ENCODE measurements at regions of chr17 and their contacts with region 1.

Region 1: DNA sequence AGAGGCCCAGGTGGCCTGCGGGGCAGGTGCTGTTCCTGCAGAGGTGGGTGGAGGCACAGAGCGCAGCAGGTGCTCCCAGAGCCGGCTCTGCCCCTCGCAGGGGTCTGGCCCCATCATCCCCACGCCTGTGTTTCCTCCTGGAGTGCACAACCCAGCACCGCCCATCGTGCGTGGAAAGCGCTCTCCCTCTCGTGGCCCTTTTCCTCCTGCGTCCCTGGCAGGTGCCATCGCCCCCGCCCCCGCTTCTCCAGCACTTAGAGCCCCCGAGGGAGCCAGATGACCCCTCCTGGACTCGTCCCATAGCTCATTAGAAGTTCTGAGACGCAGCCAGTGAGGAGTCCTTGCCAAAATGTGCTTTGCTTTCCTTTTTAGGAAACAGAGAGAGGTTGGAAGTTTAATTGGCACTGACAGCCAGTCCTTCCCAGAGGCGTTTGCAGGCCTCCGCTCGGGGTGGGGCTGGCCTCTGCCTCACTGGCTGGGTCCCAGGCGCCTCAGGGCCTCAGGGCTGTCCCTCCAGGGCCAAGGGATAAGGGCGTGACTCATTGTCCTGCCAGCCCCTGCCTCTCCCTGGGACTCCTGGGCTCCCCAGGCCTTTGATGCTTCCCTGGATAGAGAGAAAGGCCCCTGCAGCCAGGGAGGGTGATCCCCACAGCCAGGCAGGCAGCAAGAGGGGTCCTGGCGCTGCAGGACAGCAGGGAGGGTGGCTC is 32.2 kb upstream of the CHMP6 start:
- DNase-seq: peak; percentile 92

Region 2: DNA sequence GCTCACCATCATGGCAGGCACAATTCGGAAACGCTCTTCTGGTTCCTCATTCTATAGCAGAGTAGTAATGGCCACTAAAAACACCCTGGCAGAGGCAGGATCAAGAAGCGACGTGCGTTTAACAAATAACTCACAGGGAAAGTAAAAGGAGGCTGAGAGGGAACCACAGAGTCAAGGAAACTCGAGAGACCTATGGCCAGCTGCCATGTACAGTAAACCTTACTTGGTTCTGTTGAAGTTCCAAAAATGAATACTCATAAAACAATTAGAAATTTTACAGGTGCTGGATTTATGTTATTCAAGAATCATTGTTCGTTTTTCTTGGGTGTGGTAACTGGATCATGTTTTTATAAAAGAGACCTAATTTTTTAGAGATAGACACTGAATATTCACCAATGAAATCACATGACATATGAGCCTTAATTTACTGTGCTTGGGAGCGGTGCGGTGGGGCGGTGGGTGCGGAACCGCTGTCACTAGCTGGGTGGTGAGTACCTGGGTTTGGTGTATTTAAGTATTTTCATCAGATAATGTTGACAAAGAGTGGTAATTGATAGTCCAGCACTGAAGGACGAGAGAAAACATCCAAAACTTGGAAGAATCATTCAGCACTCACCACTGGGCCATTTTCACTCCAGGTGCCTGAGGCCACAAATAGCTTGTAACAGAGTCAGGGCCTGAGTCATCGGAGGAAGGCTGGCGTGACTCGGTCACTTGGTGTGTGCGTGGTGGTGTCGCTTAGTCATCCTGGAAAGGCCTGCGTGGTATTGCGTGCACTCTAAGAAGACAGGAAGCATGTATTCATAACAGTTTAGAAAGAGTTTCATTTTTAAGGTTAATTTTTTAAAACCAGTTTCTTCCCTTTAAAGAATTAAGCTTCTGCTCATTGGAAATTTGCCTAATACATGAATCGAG is 103.3 kb before region 1 on chr17:
- intact Hi-C with region 1: loop called (anchors 5 kb)
- DNase-seq: peak; percentile 88

Region 3: DNA sequence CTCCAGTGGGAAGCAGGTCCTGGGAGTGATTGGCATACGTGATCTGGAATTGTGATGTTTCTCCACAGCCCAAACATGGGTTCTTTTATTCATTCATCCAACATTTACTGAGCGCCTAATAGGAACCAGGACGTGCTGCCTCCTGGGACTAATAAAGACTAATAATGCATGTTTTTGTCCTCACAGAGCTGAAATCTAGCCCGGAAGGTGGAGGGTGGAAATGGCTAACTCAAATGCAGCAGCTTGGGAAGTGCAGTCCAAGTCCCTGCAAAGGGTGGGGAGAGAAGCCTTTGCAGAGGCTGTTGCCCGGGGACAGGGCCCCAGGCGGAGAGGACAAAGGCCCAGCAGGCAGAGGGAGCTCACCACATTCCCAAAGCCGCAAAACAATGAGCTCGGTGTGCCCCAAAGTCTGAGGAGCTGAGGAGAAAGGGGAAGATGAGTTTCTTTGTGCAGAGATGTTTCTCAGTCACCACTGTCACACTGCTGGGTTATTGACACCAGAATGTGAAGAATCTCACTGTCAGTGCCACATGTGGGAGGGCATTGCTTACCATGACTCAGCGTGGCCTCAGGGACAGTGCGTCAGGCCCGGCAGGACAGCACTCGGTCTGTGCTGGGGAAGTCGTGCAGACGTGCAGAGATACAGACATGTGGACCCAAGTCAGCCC is 86.1 kb before region 1 on chr17:
- intact Hi-C with region 1: loop called (anchors 5 kb)
- DNase-seq: no peak

Region 4: GRCh38 chr17:80892019-80892855 is 67.2 kb before region 1 on chr17:
- intact Hi-C with region 1: no loop called
- DNase-seq: no peak